CD14-positive monocyte (primary cell): ENCODE measurements at regions of chr14 and their contacts with region 1.

Region 1: GRCh38 chr14:95561001-95561412 is 26.2 kb downstream of the GLRX5 start:
- DNase-seq: peak; percentile 33 to 61 (median 41)
- H3K4me3 ChIP-seq: no peak overlapping the region
- H3K4me3 Mint-ChIP-seq: no peak overlapping the region
- H3K27ac ChIP-seq: no peak overlapping the region
- H3K27ac Mint-ChIP-seq: peak overlapping the region in 1 of 7 donors; percentile 31
- H3K4me1 ChIP-seq: no peaks in the 10 kb centered on the region
- H3K4me1 Mint-ChIP-seq: peaks cover 5% of the 10 kb centered on the region
- H3K27me3 ChIP-seq: no peaks in the 10 kb centered on the region
- H3K27me3 Mint-ChIP-seq: peaks cover 6 to 11% (median 8%) of the 10 kb centered on the region in 3 donors
- CTCF ChIP-seq: peak; percentile 94

Region 2: GRCh38 chr14:95774265-95775160 is 213.5 kb after region 1 on chr14:
- intact Hi-C with region 1: loop called (anchors 5 kb)
- DNase-seq: peak in 2 of 3 donors; percentile 13 to 17
- H3K4me3 ChIP-seq: no peak overlapping the region
- H3K4me3 Mint-ChIP-seq: no peak overlapping the region
- H3K27ac ChIP-seq: no peak overlapping the region
- H3K27ac Mint-ChIP-seq: no peak overlapping the region
- H3K4me1 ChIP-seq: no peaks in the 10 kb centered on the region
- H3K4me1 Mint-ChIP-seq: no peaks in the 10 kb centered on the region
- H3K27me3 ChIP-seq: no peaks in the 10 kb centered on the region
- H3K27me3 Mint-ChIP-seq: peaks cover 0 to 8% (median 2%) of the 10 kb centered on the region in 3 donors
- CTCF ChIP-seq: peak; percentile 93

Region 3: GRCh38 chr14:95993768-95994592 is 433.0 kb after region 1 on chr14:
- intact Hi-C with region 1: loop called (anchors 5 kb)
- DNase-seq: peak in 1 of 3 donors; percentile 15
- H3K4me3 ChIP-seq: no peak overlapping the region
- H3K4me3 Mint-ChIP-seq: no peak overlapping the region
- H3K27ac ChIP-seq: no peak overlapping the region
- H3K27ac Mint-ChIP-seq: no peak overlapping the region
- H3K4me1 ChIP-seq: no peaks in the 10 kb centered on the region
- H3K4me1 Mint-ChIP-seq: no peaks in the 10 kb centered on the region
- H3K27me3 ChIP-seq: no peaks in the 10 kb centered on the region
- H3K27me3 Mint-ChIP-seq: peaks cover 3 to 13% (median 6%) of the 10 kb centered on the region in 3 donors
- CTCF ChIP-seq: peak; percentile 82

Region 4: GRCh38 chr14:96275177-96276112 is 714.4 kb after region 1 on chr14:
- intact Hi-C with region 1: loop called in 1 of 2 experiments (anchors 10 kb)
- DNase-seq: peak; percentile 3 to 38 (median 10)
- H3K4me3 ChIP-seq: no peak overlapping the region
- H3K4me3 Mint-ChIP-seq: no peak overlapping the region
- H3K27ac ChIP-seq: no peak overlapping the region
- H3K27ac Mint-ChIP-seq: no peak overlapping the region
- H3K4me1 ChIP-seq: no peaks in the 10 kb centered on the region
- H3K4me1 Mint-ChIP-seq: no peaks in the 10 kb centered on the region
- H3K27me3 ChIP-seq: no peaks in the 10 kb centered on the region
- H3K27me3 Mint-ChIP-seq: peaks cover 0 to 1% (median 0%) of the 10 kb centered on the region in 3 donors
- CTCF ChIP-seq: peak; percentile 78